Endothelial cell of umbilical vein (primary cell): ENCODE measurements at regions of chr15 and their contacts with region 1.

Region 1: DNA sequence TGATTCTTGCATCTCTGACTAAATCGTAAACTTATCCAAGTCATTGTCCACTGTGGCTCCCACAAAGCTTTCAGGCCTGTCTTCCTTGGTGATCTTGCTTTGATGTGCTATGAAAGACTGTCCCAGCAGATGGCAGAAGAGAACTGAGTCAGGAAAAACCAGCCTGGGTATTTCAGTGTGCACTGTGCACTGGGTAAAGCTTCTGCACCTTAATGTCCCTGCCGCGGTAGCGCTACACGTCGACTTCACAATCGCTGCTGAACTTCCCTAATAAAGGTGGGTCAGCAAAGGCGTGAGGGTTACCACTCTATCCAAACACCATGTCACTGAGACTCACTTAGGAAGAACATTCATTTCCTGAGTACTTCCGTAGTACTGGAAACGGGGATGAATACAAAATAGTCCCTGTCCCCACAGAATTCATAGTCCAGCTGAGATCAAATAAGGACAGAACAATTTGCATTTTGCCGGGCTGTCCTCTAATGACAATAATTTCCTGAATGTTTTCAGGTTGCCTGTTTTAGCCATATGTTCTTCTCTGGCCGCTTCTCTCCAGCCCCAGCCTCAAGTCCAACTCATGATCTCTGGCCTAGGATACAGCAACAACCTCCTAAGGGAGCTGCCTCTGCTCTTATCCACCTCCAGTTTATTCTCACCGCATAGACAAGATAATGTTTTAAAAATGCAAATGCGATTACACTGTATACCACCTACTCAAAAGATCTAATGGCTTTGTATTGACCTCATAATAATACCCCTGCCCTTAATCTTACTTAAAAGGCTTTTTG is 83.6 kb upstream of the AKAP13 start:
- DNase-seq: peak; percentile 85
- H3K4me3 ChIP-seq: no peak overlapping the region
- H3K27ac ChIP-seq: no peak overlapping the region
- H3K4me1 ChIP-seq: peaks cover 7% of the 10 kb centered on the region
- H3K27me3 ChIP-seq: peaks cover 0 to 2% of the 10 kb centered on the region in 2 experiments
- CTCF ChIP-seq: peak; percentile 62 to 71
- POLR2A ChIP-seq: no peak

Region 2: GRCh38 chr15:85312486-85312885 is 15.7 kb after region 1 on chr15:
- CTCF ChIA-PET with region 1: interaction called, 15 read pairs
- POLR2A ChIA-PET with region 1: no interaction called
- dilution Hi-C with region 1: no loop called
- intact Hi-C with region 1: no loop called
- DNase-seq: no peak
- H3K4me3 ChIP-seq: no peak overlapping the region
- H3K27ac ChIP-seq: no peak overlapping the region
- H3K4me1 ChIP-seq: peaks cover 4% of the 10 kb centered on the region
- H3K27me3 ChIP-seq: peaks cover 0 to 6% of the 10 kb centered on the region in 2 experiments
- CTCF ChIP-seq: no peak
- POLR2A ChIP-seq: no peak

Region 3: DNA sequence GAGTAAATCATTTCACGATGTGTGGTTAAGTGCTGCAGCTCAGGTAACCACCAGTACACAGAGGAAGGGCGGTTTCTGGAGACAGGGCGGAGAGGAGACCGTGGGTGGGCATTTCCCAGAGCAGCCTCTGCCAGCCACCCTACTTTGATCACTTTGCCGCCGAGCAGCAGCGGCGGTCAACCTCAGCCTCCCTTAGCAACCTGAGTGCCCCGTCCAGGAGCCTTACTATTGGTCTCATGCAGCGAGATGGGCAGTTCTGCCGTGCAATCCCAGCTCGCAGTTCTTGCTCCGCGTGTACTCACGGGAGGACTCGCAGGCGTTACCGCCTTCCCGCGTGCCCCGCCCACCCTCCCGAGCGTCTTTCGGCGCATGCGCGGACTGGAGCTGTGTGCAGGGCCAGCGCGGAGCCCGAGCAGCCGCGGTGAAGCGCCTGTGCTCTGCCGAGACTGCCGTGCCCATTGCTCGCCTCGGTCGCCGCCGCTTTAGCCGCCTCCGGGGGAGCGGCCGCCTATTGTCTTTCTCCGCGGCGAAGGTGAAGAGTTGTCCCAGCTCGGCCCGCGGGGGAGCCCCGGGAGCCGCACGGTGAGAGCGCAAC is 83.5 kb after region 1 on chr15 and contains the start of gene AKAP13:
- CTCF ChIA-PET with region 1: interaction called, 9 read pairs
- POLR2A ChIA-PET with region 1: no interaction called
- dilution Hi-C with region 1: no loop called
- intact Hi-C with region 1: loop called (anchors 1 kb)
- DNase-seq: peak; percentile 99
- H3K4me3 ChIP-seq: peak within 1 kb of the TSS; percentile 57 to 79 (median 78)
- H3K27ac ChIP-seq: peak within 1 kb of the TSS; percentile 56
- H3K4me1 ChIP-seq: peaks cover 8% of the 10 kb centered on the region
- H3K27me3 ChIP-seq: no peaks in the 10 kb centered on the region
- CTCF ChIP-seq: no peak
- POLR2A ChIP-seq: peak; percentile 54
- total RNA-seq, gene AKAP13: 80.3 and 87.8 TPM in 2 replicates

Region 4: DNA sequence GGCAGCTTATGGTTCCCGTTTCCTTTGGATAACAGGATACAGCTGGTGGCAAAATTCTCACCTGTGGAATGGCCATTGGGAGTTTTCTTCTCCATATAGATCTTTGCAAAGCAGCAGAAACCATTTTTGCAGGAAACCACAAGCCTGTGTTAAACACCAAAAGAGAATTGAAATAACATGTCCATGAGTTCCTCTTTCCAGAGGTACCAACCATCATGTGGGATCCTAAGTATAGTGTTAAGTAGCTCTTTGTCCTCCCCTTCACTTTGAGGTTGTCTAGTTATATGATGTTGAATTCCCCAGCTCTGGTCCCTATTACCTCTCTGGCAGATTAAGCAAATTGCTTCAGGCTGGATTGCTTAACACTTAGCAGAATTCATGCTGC is 178.5 kb after region 1 on chr15:
- CTCF ChIA-PET with region 1: interaction called, 15 read pairs
- POLR2A ChIA-PET with region 1: no interaction called
- dilution Hi-C with region 1: no loop called
- intact Hi-C with region 1: loop called (anchors 1 kb)
- DNase-seq: peak; percentile 63
- H3K4me3 ChIP-seq: no peak overlapping the region
- H3K27ac ChIP-seq: no peak overlapping the region
- H3K4me1 ChIP-seq: peaks cover 40% of the 10 kb centered on the region
- H3K27me3 ChIP-seq: no peaks in the 10 kb centered on the region
- CTCF ChIP-seq: no peak
- POLR2A ChIP-seq: no peak

Region 5: GRCh38 chr15:85582131-85583079 is 285.6 kb after region 1 on chr15:
- CTCF ChIA-PET with region 1: interaction called, 8 read pairs
- POLR2A ChIA-PET with region 1: no interaction called
- dilution Hi-C with region 1: no loop called
- intact Hi-C with region 1: loop called (anchors 10 kb)
- DNase-seq: peak; percentile 98
- H3K4me3 ChIP-seq: peak overlapping the region; percentile 20 to 55 (median 33)
- H3K27ac ChIP-seq: peak overlapping the region; percentile 91
- H3K4me1 ChIP-seq: peaks cover 67% of the 10 kb centered on the region
- H3K27me3 ChIP-seq: no peaks in the 10 kb centered on the region
- CTCF ChIP-seq: no peak
- POLR2A ChIP-seq: peak; percentile 78

Region 6: GRCh38 chr15:85707519-85708338 is 410.9 kb after region 1 on chr15:
- CTCF ChIA-PET with region 1: interaction called, 7 read pairs
- POLR2A ChIA-PET with region 1: no interaction called
- dilution Hi-C with region 1: no loop called
- intact Hi-C with region 1: loop called (anchors 10 kb)
- DNase-seq: peak; percentile 88
- H3K4me3 ChIP-seq: peak overlapping the region in 2 of 3 experiments; percentile 5 to 51
- H3K27ac ChIP-seq: peak overlapping the region; percentile 92
- H3K4me1 ChIP-seq: peaks cover 18% of the 10 kb centered on the region
- H3K27me3 ChIP-seq: no peaks in the 10 kb centered on the region
- CTCF ChIP-seq: no peak
- POLR2A ChIP-seq: no peak